Activated T-helper 1 cell treated with anti-CD3 and anti-CD28 coated beads, Interleukin-12 subunit alpha, Interleukin-12 subunit beta, Interleukin-2, Interleukin-4 antibody, amounts not matched to agents 30 ng/mL and 10 ng/mL and 1 ng/mL, durations not matched to agents 14 hours and 24 hours and 36 hours (primary cell): ENCODE measurements at regions of chr11 and their contacts with region 1.

Region 1: DNA sequence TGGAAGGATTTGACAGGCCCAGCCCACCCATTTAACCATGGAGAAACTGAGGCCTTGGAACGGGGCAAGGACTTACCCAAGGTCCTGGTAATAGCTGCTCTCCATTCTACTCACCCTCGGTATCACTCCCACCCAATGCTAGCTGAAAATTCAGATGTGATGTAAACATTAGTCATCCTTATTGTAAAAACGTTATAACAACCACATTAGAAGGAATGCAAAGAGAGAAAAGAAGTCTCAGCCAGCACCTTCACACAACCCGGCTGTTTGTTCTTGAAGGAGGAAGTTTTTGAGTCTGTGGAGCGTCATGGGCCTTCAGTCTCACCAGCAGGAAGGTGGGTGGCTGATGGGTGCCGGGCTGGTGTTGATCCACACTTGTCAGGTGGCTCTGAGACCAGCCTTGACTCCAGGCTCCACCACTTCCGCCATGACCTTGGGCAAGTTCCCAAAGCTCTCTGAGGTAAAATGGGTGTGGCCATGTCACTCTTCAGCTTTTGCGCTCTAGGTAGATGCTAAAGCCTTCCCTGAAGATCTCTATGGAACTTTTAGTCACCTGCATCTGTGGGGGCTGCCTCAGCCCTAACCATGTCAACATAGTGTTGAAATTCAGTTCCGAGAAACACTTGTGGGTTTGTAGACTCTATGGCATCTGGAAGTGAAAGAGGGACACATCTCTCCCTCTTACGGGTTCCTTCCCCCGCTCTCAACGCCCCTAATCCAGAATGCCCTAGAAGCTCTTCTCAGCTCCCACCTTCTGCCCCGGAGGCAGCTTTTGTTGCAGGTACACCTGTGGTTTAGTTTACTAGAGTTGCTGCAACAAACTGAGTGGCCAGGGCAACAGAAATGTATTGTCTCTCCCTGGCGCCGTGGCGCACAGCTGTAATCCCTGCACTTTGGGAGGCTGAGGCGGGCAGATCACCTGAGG is 14.8 kb downstream of the CD6 start:
- DNase-seq: peak; percentile 81
- H3K4me3 Mint-ChIP-seq: peak overlapping the region; percentile 80
- H3K27ac Mint-ChIP-seq: peak overlapping the region; percentile 92
- H3K4me1 Mint-ChIP-seq: peaks cover 94% of the 10 kb centered on the region
- H3K27me3 Mint-ChIP-seq: no peaks in the 10 kb centered on the region

Region 2: DNA sequence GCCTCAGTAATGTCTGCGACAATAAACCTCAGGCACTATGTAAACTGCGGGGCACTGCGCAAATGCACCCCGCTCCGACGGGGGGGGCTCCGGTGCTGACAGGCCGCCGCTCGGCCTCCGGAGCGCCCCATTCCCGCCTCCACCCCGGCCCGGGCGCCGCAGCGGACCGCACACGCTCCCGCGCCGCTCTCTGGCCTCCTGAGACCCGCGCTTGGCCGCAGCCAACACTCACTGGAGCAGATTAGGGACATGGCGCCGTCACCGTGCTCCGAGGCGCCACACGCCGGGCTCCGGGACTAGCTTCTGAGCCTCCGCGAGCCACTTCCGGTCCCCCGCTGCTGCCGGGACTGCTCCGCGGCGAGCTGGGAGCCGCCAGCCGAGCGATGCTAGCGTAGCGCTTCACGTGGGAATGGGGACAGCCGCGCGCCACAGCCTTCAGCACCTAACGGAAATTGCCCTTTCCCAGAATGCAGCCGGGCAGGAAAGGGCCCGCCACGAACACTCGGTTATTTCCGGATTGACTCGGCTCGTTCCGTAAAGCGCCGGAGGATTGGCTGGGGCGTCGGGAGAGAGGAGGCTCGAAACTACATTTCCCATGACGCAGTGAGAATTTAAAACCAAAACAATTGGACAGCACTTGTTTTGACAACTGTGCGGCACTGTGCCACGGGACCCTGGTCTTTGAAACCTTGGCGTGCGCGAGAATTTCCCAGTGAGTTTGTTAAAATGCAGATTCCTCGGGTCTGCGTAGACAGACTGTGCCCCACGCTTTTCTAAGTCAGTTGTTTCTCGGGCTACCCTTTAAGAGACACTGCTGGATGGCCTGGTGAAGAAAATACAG is 79.9 kb before region 1 on chr11 and contains the start of gene PRPF19:
- intact Hi-C with region 1: loop called (anchors 1 kb)
- DNase-seq: peak; percentile 99
- H3K4me3 Mint-ChIP-seq: peak within 1 kb of the TSS; percentile 90
- H3K27ac Mint-ChIP-seq: peak within 1 kb of the TSS; percentile 90
- H3K4me1 Mint-ChIP-seq: peaks cover 38% of the 10 kb centered on the region
- H3K27me3 Mint-ChIP-seq: peaks cover 15% of the 10 kb centered on the region
- total RNA-seq, gene PRPF19: 221 and 222 TPM in 2 replicates

Region 3: GRCh38 chr11:60924110-60924905 is 61.9 kb before region 1 on chr11 and contains the start of gene TMEM132A:
- intact Hi-C with region 1: no loop called
- DNase-seq: no peak
- H3K4me3 Mint-ChIP-seq: peak within 1 kb of the TSS; percentile 65
- H3K27ac Mint-ChIP-seq: no peak within 1 kb of the TSS
- H3K4me1 Mint-ChIP-seq: peaks cover 12% of the 10 kb centered on the region
- H3K27me3 Mint-ChIP-seq: peaks cover 19% of the 10 kb centered on the region
- total RNA-seq, gene TMEM132A: 2.4 and 3.2 TPM in 2 replicates

Region 4: GRCh38 chr11:61004180-61004611 is 17.9 kb after region 1 on chr11:
- intact Hi-C with region 1: loop called (anchors 2 kb)
- DNase-seq: no peak
- H3K4me3 Mint-ChIP-seq: peak overlapping the region; percentile 68
- H3K27ac Mint-ChIP-seq: peak overlapping the region; percentile 87
- H3K4me1 Mint-ChIP-seq: peaks cover 73% of the 10 kb centered on the region
- H3K27me3 Mint-ChIP-seq: no peaks in the 10 kb centered on the region

Region 5: GRCh38 chr11:61021661-61022212 is 35.5 kb after region 1 on chr11:
- intact Hi-C with region 1: loop called (anchors 1 kb)
- DNase-seq: peak; percentile 78
- H3K4me3 Mint-ChIP-seq: peak overlapping the region; percentile 66
- H3K27ac Mint-ChIP-seq: peak overlapping the region; percentile 89
- H3K4me1 Mint-ChIP-seq: peaks cover 65% of the 10 kb centered on the region
- H3K27me3 Mint-ChIP-seq: no peaks in the 10 kb centered on the region

Region 6: GRCh38 chr11:61083601-61084147 is 97.4 kb after region 1 on chr11:
- intact Hi-C with region 1: loop called (anchors 2 kb)
- DNase-seq: peak; percentile 75
- H3K4me3 Mint-ChIP-seq: peak overlapping the region; percentile 88
- H3K27ac Mint-ChIP-seq: peak overlapping the region; percentile 99
- H3K4me1 Mint-ChIP-seq: peaks cover 67% of the 10 kb centered on the region
- H3K27me3 Mint-ChIP-seq: no peaks in the 10 kb centered on the region

Region 7: GRCh38 chr11:61091373-61092279 is 105.4 kb after region 1 on chr11:
- intact Hi-C with region 1: loop called (anchors 1 kb)
- DNase-seq: peak; percentile 41
- H3K4me3 Mint-ChIP-seq: peak overlapping the region; percentile 96
- H3K27ac Mint-ChIP-seq: peak overlapping the region; percentile 98
- H3K4me1 Mint-ChIP-seq: peaks cover 77% of the 10 kb centered on the region
- H3K27me3 Mint-ChIP-seq: no peaks in the 10 kb centered on the region

Region 8: GRCh38 chr11:61120706-61121191 is 134.5 kb after region 1 on chr11:
- intact Hi-C with region 1: loop called (anchors 1 kb)
- DNase-seq: no peak
- H3K4me3 Mint-ChIP-seq: peak overlapping the region; percentile 17
- H3K27ac Mint-ChIP-seq: peak overlapping the region; percentile 57
- H3K4me1 Mint-ChIP-seq: peaks cover 54% of the 10 kb centered on the region
- H3K27me3 Mint-ChIP-seq: no peaks in the 10 kb centered on the region